Mammary epithelial cell (primary cell): ENCODE measurements at regions of chr5 and their contacts with region 1.

Region 1: DNA sequence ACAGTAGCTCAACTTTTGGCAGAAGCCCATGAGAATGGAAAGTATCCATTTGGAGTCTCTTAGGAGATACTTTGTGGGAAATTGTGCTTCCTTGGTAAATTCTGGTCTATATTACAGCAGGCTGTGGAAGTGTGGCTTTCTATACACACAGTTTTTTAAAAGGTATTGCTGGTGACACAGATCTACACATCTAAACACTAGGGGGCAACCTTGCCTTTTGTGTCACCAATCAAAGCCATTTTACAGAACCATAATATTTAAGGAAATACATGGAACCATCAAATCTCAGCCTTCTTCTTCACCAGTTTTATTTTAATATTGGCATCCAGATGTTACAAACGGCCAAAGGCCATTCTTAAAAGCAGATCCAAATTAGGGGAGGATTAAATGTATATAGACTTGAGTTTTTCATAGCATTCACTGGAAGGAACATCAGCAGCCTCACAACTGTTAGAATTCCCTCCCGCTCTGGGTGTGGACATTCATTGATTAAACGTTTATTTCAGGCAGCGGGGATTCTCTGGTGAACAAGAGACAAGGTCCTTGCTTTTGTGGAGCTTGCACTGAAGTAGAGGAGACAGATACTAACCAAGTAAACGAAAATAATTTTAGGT is 132.4 kb upstream of the EPB41L4A start:
- DNase-seq: peak; percentile 35
- H3K4me3 ChIP-seq: no peak overlapping the region
- H3K27ac ChIP-seq: no peak overlapping the region
- H3K4me1 ChIP-seq: no peaks in the 10 kb centered on the region
- H3K27me3 ChIP-seq: no peaks in the 10 kb centered on the region
- CTCF ChIP-seq: peak; percentile 59 to 70

Region 2: GRCh38 chr5:112752335-112752734 is 200.8 kb after region 1 on chr5:
- CTCF ChIA-PET with region 1: no interaction called
- dilution Hi-C with region 1: no loop called
- in situ Hi-C with region 1: loop called (anchors 5 kb)
- intact Hi-C with region 1: loop called (anchors 1 kb)
- DNase-seq: no peak
- H3K4me3 ChIP-seq: no peak overlapping the region
- H3K27ac ChIP-seq: no peak overlapping the region
- H3K4me1 ChIP-seq: no peaks in the 10 kb centered on the region
- H3K27me3 ChIP-seq: no peaks in the 10 kb centered on the region
- CTCF ChIP-seq: no peak

Region 3: GRCh38 chr5:112757468-112758208 is 206.1 kb after region 1 on chr5:
- CTCF ChIA-PET with region 1: no interaction called
- dilution Hi-C with region 1: no loop called
- in situ Hi-C with region 1: loop called (anchors 5 kb)
- intact Hi-C with region 1: loop called (anchors 1 kb)
- DNase-seq: peak; percentile 34
- H3K4me3 ChIP-seq: no peak overlapping the region
- H3K27ac ChIP-seq: no peak overlapping the region
- H3K4me1 ChIP-seq: peaks cover 4% of the 10 kb centered on the region
- H3K27me3 ChIP-seq: no peaks in the 10 kb centered on the region
- CTCF ChIP-seq: peak; percentile 71 to 82

Region 4: GRCh38 chr5:112848116-112848811 is 296.7 kb after region 1 on chr5:
- CTCF ChIA-PET with region 1: no interaction called
- dilution Hi-C with region 1: no loop called
- in situ Hi-C with region 1: no loop called
- intact Hi-C with region 1: loop called (anchors 1 kb)
- DNase-seq: peak; percentile 57
- H3K4me3 ChIP-seq: no peak overlapping the region
- H3K27ac ChIP-seq: no peak overlapping the region
- H3K4me1 ChIP-seq: no peaks in the 10 kb centered on the region
- H3K27me3 ChIP-seq: no peaks in the 10 kb centered on the region
- CTCF ChIP-seq: peak; percentile 73 to 76

Region 5: GRCh38 chr5:112921833-112922817 is 370.6 kb after region 1 on chr5 and contains the start of gene REEP5:
- CTCF ChIA-PET with region 1: no interaction called
- dilution Hi-C with region 1: no loop called
- in situ Hi-C with region 1: no loop called
- intact Hi-C with region 1: loop called (anchors 1 kb)
- DNase-seq: peak; percentile 73
- H3K4me3 ChIP-seq: peak within 1 kb of the TSS; percentile 77 to 100 (median 97)
- H3K27ac ChIP-seq: peak within 1 kb of the TSS; percentile 71
- H3K4me1 ChIP-seq: peaks cover 14% of the 10 kb centered on the region
- H3K27me3 ChIP-seq: no peaks in the 10 kb centered on the region
- CTCF ChIP-seq: peak; percentile 33 to 61
- total RNA-seq, gene REEP5: 60.7 to 102 TPM

Region 6: DNA sequence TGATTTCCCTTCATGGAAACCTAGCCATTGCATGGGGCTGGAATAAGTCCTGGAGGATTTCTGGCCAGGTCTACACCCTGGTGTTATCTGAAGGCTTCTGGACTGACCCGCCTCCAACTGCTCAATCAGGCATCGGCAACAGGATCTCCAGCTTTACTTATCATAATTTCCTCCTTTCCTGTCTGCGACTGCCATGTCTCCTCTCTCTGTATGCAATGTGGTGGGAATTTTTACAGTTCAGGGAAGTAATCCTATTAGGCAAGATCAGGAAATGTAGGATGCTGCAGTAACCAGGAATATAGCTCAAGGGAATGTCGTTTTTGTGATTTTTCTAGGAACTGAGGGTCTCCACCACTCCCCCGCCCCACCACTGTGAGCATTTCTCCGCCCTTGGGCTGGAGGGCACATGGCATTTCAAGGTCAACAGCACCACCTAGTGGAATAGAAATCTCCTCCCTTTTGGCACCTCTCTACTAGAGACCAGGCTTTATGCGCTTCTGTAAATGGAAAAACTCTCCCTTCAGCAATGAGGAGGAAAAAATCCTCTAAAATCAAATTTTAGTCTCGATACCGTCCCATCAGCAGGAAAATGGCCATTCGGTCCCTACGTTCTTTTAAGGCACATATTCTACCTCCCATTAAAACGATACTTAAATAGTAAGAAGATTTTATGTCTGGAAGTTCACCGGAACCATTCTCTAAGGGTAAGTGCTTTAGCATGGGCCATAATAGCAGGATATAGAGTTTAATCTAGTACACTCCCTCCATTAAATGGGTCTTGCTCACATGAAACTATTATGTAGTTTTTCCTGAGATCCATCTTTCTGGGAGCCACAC is 1055.0 kb after region 1 on chr5:
- CTCF ChIA-PET with region 1: no interaction called
- dilution Hi-C with region 1: no loop called
- in situ Hi-C with region 1: no loop called
- intact Hi-C with region 1: loop called (anchors 1 kb)
- DNase-seq: peak; percentile 38
- H3K4me3 ChIP-seq: no peak overlapping the region
- H3K27ac ChIP-seq: no peak overlapping the region
- H3K4me1 ChIP-seq: peaks cover 10% of the 10 kb centered on the region
- H3K27me3 ChIP-seq: no peaks in the 10 kb centered on the region
- CTCF ChIP-seq: peak; percentile 70 to 80